ENCODE measurements at regions of chr12 and their contacts with region 1.

Region 1: GRCh38 chr12:72747111-72747849 is 475.1 kb downstream of the TRHDE start:
- DNase-seq: no peak
- ATAC-seq: no peak
- H3K4me3 ChIP-seq: no peak overlapping the region
- H3K27ac ChIP-seq: no peak overlapping the region
- H3K4me1 ChIP-seq: no peaks in the 10 kb centered on the region
- H3K27me3 ChIP-seq: no peaks in the 10 kb centered on the region
- CTCF ChIP-seq: no peak

Region 2: GRCh38 chr12:72560003-72560769 is 187.1 kb before region 1 on chr12:
- CTCF ChIA-PET with region 1: no interaction called
- POLR2A ChIA-PET with region 1: no interaction called
- in situ Hi-C with region 1: no loop called
- intact Hi-C with region 1: no loop called
- DNase-seq: no peak
- ATAC-seq: no peak
- H3K4me3 ChIP-seq: no peak overlapping the region
- H3K27ac ChIP-seq: no peak overlapping the region
- H3K4me1 ChIP-seq: no peaks in the 10 kb centered on the region
- H3K27me3 ChIP-seq: no peaks in the 10 kb centered on the region
- CTCF ChIP-seq: no peak

Region 3: GRCh38 chr12:72699362-72699761 is 47.9 kb before region 1 on chr12:
- CTCF ChIA-PET with region 1: no interaction called
- POLR2A ChIA-PET with region 1: interaction called, 15 read pairs
- in situ Hi-C with region 1: no loop called
- intact Hi-C with region 1: no loop called
- DNase-seq: no peak
- ATAC-seq: no peak
- H3K4me3 ChIP-seq: no peak overlapping the region
- H3K27ac ChIP-seq: no peak overlapping the region
- H3K4me1 ChIP-seq: no peaks in the 10 kb centered on the region
- H3K27me3 ChIP-seq: no peaks in the 10 kb centered on the region
- CTCF ChIP-seq: no peak

Region 4: DNA sequence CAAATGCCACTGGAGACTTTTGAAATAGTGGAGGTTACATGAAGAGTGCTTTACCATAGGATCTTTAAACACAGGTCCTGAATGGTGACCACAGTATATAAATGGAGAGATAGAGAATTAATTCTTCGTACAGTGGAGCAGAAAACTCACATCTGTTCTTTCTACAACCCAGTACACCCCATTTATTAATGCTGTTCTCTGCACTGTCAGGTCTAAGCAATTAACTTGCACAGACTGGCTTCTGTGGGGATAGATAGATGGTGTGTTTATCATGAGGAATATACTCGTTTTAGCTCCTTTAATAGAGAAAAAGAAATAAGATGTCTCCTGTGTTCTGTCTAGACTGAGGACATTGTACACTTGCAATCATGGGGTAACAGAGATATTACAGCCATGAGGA is 19.2 kb after region 1 on chr12:
- CTCF ChIA-PET with region 1: no interaction called
- POLR2A ChIA-PET with region 1: no interaction called
- in situ Hi-C with region 1: no loop called
- intact Hi-C with region 1: no loop called
- DNase-seq: no peak
- ATAC-seq: no peak
- H3K4me3 ChIP-seq: no peak overlapping the region
- H3K27ac ChIP-seq: no peak overlapping the region
- H3K4me1 ChIP-seq: no peaks in the 10 kb centered on the region
- H3K27me3 ChIP-seq: no peaks in the 10 kb centered on the region
- CTCF ChIP-seq: no peak